HepG2 (cell line): ENCODE measurements at regions of chr11 and their contacts with region 1.

Region 1: DNA sequence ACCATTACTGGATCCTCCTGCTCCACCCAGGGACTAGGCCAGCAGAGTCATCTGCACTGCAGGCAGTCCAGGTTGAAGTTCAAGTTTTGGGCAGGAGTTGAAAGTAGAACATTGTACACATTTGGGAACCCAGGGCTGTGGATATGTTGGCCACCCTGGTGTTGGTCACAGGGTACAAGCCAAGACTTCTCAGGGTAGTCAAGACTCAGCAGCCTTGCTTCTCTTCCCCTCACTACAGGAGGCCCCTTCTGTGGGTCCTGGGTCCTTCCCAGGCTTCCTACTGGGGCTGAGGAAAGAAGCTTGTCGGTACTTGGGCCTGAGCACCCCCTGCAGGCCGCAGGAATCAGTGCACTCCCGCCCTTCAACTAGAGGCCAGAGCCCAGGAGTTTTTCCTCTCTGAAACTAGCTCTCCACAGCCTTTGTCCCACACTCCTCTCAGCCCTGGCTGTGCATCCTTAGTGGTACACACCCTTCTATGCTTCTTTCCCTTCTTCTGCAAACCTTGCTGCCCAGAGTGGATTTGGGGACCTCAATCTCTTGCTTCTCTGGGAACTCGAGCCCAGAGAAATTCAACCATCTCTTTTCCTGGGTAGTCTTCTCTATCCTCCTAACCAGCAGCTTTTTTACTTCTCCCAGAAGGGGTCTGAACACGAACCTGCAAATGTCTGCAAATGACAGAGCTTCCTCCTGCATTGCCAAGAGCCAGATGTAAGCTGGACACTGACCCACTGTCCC is 2.6 kb upstream of the HPX start:
- DNase-seq: peak; percentile 28
- ATAC-seq: peak; percentile 65
- H3K4me3 ChIP-seq: no peak overlapping the region
- H3K27ac ChIP-seq: no peak overlapping the region
- H3K4me1 ChIP-seq: peaks cover 54% of the 10 kb centered on the region
- H3K27me3 ChIP-seq: no peaks in the 10 kb centered on the region; a peak in 1 of 5 replicates
- CTCF ChIP-seq: peak; percentile 86
- EP300 ChIP-seq: no peak
- POLR2A ChIP-seq: no peak
- RAD21 ChIP-seq: 0 out of 2 replicates have a peak, but pooled peaks have one; percentile 41

Region 2: GRCh38 chr11:6127881-6128280 is 315.6 kb before region 1 on chr11:
- CTCF ChIA-PET with region 1: no interaction called
- POLR2A ChIA-PET with region 1: no interaction called
- in situ Hi-C with region 1: no loop called
- intact Hi-C with region 1: no loop called
- DNase-seq: no peak
- ATAC-seq: no peak
- H3K4me3 ChIP-seq: no peak overlapping the region
- H3K27ac ChIP-seq: no peak overlapping the region
- H3K4me1 ChIP-seq: no peaks in the 10 kb centered on the region
- H3K27me3 ChIP-seq: no peaks in the 10 kb centered on the region; a peak in 1 of 5 replicates
- CTCF ChIP-seq: no peak
- EP300 ChIP-seq: no peak
- POLR2A ChIP-seq: no peak
- RAD21 ChIP-seq: no peak

Region 3: DNA sequence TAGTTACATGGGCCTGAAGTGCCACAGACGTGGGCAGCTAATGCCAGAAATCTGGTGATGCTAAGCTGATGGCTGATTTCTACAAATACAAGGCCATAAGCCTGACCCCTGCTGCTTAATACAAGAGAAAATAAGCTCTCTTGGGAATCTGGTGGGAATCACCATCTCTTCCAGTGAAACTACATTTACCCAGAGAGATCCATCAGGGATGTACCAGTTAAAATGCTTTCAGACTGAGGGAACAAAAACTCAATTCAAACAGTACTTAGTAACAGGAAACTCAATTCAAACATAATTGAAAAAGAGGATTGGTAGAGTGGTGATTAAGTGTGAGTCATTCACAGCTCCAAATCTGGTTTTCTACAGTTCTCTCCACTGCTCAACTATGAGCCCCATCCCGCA is 121.5 kb before region 1 on chr11:
- CTCF ChIA-PET with region 1: no interaction called
- POLR2A ChIA-PET with region 1: no interaction called
- in situ Hi-C with region 1: no loop called
- intact Hi-C with region 1: no loop called
- DNase-seq: no peak
- ATAC-seq: no peak
- H3K4me3 ChIP-seq: no peak overlapping the region
- H3K27ac ChIP-seq: no peak overlapping the region
- H3K4me1 ChIP-seq: no peaks in the 10 kb centered on the region
- H3K27me3 ChIP-seq: peaks cover 1 to 25% of the 10 kb centered on the region in 2 experiments; a peak in 3 of 5 replicates
- CTCF ChIP-seq: no peak
- EP300 ChIP-seq: no peak
- POLR2A ChIP-seq: no peak
- RAD21 ChIP-seq: no peak

Region 4: GRCh38 chr11:6377902-6378639 is 65.4 kb before region 1 on chr11:
- CTCF ChIA-PET with region 1: interaction called, 28 read pairs
- POLR2A ChIA-PET with region 1: interaction called, 15 read pairs
- in situ Hi-C with region 1: loop called (anchors 5 kb)
- intact Hi-C with region 1: loop called (anchors 1 kb)
- DNase-seq: no peak
- ATAC-seq: no peak
- H3K4me3 ChIP-seq: no peak overlapping the region
- H3K27ac ChIP-seq: no peak overlapping the region
- H3K4me1 ChIP-seq: no peaks in the 10 kb centered on the region
- H3K27me3 ChIP-seq: peaks cover 1 to 8% of the 10 kb centered on the region in 2 experiments; a peak in 2 of 5 replicates
- CTCF ChIP-seq: no peak
- EP300 ChIP-seq: no peak
- POLR2A ChIP-seq: no peak
- RAD21 ChIP-seq: no peak

Region 5: GRCh38 chr11:6419009-6419631 is 24.3 kb before region 1 on chr11 and contains the start of gene APBB1:
- CTCF ChIA-PET with region 1: no interaction called
- POLR2A ChIA-PET with region 1: interaction called, 22 read pairs
- in situ Hi-C with region 1: no loop called
- intact Hi-C with region 1: no loop called
- DNase-seq: no peak
- ATAC-seq: peak; percentile 81
- H3K4me3 ChIP-seq: peak within 1 kb of the TSS; percentile 77 to 90 (median 82)
- H3K27ac ChIP-seq: no peak within 1 kb of the TSS
- H3K4me1 ChIP-seq: peaks cover 12% of the 10 kb centered on the region
- H3K27me3 ChIP-seq: peaks cover 0 to 30% of the 10 kb centered on the region in 2 experiments; a peak in 3 of 5 replicates
- CTCF ChIP-seq: no peak
- EP300 ChIP-seq: no peak
- POLR2A ChIP-seq: no peak
- RAD21 ChIP-seq: no peak
- total RNA-seq, gene APBB1: 2.4 and 3.5 TPM in 2 replicates

Region 6: DNA sequence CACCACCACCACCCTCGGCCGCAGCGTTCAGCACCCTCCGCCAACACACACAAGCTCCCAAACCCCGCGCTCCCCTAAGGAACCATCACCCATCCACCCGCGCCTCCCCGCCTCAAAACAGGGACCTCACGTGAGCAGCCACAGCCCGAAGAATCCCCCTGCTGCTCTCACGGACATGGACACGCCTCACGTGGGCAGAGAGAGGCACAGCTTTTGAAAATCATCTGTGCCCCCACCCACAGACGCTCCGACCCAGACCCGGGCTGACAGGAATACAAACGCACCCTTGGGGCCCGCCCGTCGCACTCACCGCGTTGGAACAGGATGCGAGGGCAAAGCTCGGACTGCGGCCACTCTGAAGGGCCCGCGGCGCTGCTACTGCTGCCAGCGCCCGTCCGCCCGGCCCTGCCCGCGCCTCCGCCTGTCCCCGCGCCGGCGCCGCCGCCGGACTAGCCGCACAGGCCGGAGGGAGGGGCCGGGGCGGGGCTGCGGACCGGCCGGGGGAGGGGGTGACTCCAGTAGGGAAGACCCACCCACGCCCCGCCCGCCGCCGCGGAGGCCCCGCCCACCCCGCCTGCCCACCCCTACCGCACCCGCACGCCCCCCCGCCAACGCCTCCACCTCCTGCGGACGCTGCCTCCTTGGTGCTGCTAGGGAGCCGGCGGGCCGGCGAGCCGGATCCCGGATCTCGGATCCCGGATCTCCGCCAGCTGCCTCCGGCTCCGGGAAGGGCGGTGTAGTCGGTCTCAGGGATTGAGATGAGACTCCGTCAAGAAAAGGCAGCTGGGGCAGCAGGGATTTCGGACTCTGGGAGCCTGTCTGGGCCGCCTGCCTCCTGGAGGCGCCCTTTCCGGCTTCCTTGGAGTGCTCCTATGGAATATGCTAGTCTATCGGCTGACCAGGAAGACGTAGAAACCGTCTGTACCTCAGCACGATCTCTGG is 30.3 kb after region 1 on chr11 and contains the start of gene TRIM3:
- CTCF ChIA-PET with region 1: no interaction called
- POLR2A ChIA-PET with region 1: interaction called, 9 read pairs
- in situ Hi-C with region 1: no loop called
- intact Hi-C with region 1: loop called (anchors 2 kb)
- DNase-seq: peak; percentile 50
- ATAC-seq: peak; percentile 88
- H3K4me3 ChIP-seq: peak within 1 kb of the TSS; percentile 78 to 97 (median 88)
- H3K27ac ChIP-seq: peak within 1 kb of the TSS; percentile 44
- H3K4me1 ChIP-seq: peaks cover 47% of the 10 kb centered on the region
- H3K27me3 ChIP-seq: no peaks in the 10 kb centered on the region; a peak in 1 of 5 replicates
- CTCF ChIP-seq: peak; percentile 34
- EP300 ChIP-seq: no peak
- POLR2A ChIP-seq: peak; percentile 48 to 53; a peak in 3 of 4 replicates
- RAD21 ChIP-seq: 0 out of 2 replicates have a peak, but pooled peaks have one; percentile 18
- total RNA-seq, gene TRIM3: 2.8 and 6.3 TPM in 2 replicates

Region 7: DNA sequence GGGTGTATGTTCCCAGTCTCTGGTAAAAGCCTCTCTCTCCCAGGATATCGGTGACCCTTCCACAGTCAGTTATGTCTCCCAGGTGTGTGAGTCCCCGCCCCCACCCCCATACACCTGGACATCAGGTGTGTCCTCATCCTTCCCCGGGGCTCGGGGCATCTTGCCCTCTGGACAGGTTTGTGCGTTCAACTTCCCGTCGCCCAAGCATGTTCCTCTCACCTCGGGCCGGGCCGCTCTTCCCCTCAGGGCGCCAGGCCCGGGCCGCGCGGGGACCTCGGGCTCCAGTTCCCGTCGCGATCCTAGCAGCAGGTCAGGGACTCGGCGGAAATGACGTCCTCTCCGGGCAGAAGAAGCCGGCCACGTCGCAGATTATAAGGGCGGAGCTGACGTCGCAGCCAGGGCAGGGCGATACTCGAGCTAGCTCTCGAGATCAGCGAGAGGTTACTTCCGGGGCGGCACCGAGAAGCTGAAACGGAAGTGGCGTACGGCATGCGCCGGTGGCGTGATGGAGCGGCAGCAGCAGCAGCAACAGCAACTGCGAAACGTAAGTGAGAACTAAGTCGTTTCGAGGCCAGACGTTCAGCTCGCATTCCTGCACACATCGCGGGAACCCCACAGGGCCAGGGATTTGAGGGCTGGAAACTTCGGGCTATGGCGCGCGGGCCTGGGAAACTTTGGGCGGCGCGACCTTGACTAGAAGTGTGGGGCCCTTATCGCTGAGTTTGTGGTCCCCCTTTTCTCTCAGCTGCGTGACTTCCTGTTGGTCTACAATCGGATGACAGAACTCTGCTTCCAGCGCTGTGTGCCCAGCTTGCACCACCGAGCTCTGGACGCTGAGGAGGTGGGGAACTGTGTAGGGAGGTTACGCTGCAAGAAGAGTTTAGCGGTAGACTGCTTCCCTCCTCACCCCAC is 37.8 kb after region 1 on chr11 and contains the starts of genes ARFIP2 and TIMM10B:
- CTCF ChIA-PET with region 1: no interaction called
- POLR2A ChIA-PET with region 1: interaction called, 12 read pairs
- in situ Hi-C with region 1: no loop called
- intact Hi-C with region 1: no loop called
- DNase-seq: peak; percentile 96
- ATAC-seq: peak; percentile 96
- H3K4me3 ChIP-seq: peak within 1 kb of the TSS; percentile 86 to 92 (median 86)
- H3K27ac ChIP-seq: peak within 1 kb of the TSS; percentile 95
- H3K4me1 ChIP-seq: peaks cover 56% of the 10 kb centered on the region
- H3K27me3 ChIP-seq: no peaks in the 10 kb centered on the region; a peak in 1 of 5 replicates
- CTCF ChIP-seq: no peak; the same call in 1 of the 2 replicates
- EP300 ChIP-seq: peak in 1 of 2 experiments; percentile 43; a peak in 1 of 4 replicates
- POLR2A ChIP-seq: peak; percentile 94 to 98
- RAD21 ChIP-seq: 0 out of 2 replicates have a peak, but pooled peaks have one; percentile 9
- total RNA-seq, gene ARFIP2: 58.9 and 60.2 TPM in 2 replicates
- total RNA-seq, gene TIMM10B: 39.5 and 60.1 TPM in 2 replicates

Region 8: DNA sequence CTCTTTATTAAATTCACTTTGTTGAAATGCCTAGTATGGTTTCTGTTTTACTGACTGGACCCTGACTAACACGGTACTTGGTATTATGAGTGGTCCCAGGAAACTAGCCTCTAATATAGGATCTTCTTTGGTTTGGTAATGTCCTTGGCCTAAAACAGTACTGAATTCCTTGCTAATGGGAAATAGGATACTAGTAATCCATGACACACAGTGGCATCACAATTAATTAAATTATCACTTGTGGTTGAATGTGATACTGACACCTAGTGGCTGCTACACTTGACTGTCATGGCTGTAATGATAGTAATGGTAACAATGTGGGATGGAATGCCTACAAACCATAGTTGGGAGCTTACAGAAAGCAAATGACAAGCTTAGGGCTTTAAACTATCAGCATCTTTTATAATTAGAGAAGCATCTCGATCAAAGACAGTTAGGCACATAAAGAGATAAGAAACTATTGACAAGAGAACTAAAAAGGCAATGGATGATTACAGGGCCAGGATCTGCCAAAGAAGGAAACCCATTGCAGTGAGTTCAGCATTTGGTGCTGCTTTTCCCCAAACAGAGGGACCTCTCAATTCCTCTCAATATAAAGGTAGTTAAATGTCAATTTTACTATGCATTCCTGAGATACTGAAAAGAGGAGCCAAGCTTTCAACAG is 62.3 kb after region 1 on chr11:
- CTCF ChIA-PET with region 1: interaction called, 9 read pairs
- POLR2A ChIA-PET with region 1: interaction called, 3 read pairs
- in situ Hi-C with region 1: no loop called
- intact Hi-C with region 1: loop called (anchors 1 kb)
- DNase-seq: peak; percentile 25
- ATAC-seq: peak; percentile 78
- H3K4me3 ChIP-seq: no peak overlapping the region
- H3K27ac ChIP-seq: no peak overlapping the region
- H3K4me1 ChIP-seq: no peaks in the 10 kb centered on the region
- H3K27me3 ChIP-seq: no peaks in the 10 kb centered on the region; a peak in 1 of 5 replicates
- CTCF ChIP-seq: peak; percentile 75
- EP300 ChIP-seq: no peak
- POLR2A ChIP-seq: no peak
- RAD21 ChIP-seq: 0 out of 2 replicates have a peak, but pooled peaks have one; percentile 36